ENCODE measurements at regions of chr16 and their contacts with region 1.

Region 1: DNA sequence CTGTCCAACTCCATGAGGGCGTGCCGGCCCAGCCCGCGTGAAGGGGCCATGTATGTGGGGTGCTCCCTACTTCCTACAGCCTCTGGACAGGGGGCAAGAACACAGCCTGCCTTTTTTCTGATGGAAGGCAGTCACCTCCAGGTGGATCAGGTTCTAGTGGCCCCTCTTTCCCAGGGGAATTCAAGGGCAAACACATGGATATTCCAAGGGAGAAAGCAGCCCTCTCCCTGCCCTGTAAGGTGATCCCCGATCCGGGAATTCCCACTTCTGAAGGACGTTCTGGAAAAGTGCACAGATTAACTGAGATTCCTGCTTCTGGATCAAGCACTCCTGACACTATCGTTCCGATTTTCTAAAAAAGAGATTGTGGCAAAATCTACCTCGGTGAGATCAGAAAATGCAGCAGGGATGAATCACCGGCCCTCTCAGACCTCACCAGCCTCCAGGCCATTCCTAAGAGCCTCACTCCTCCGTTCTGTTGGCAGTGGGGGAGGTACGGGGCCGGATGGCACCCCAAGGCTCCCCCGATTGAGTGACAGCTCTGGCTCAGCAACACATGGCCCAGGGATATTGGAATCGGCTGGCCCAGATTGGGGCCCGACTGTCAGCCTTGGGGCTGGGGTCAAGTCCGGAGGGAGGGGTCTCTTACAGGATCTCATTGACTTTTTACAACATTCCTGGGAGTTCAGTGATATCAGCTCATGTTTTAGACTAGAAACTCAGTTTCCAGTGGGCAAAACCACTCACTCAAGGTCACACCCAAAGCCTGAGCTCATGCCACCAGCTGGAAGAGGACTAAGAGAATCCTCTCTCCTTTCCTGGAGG is 12.3 kb downstream of the STX1B start:
- DNase-seq: peak; percentile 55
- H3K4me3 ChIP-seq: peak overlapping the region; percentile 49
- H3K27ac ChIP-seq: peak overlapping the region; percentile 99
- H3K27me3 ChIP-seq: no peaks in the 10 kb centered on the region
- CTCF ChIP-seq: no peak

Region 2: DNA sequence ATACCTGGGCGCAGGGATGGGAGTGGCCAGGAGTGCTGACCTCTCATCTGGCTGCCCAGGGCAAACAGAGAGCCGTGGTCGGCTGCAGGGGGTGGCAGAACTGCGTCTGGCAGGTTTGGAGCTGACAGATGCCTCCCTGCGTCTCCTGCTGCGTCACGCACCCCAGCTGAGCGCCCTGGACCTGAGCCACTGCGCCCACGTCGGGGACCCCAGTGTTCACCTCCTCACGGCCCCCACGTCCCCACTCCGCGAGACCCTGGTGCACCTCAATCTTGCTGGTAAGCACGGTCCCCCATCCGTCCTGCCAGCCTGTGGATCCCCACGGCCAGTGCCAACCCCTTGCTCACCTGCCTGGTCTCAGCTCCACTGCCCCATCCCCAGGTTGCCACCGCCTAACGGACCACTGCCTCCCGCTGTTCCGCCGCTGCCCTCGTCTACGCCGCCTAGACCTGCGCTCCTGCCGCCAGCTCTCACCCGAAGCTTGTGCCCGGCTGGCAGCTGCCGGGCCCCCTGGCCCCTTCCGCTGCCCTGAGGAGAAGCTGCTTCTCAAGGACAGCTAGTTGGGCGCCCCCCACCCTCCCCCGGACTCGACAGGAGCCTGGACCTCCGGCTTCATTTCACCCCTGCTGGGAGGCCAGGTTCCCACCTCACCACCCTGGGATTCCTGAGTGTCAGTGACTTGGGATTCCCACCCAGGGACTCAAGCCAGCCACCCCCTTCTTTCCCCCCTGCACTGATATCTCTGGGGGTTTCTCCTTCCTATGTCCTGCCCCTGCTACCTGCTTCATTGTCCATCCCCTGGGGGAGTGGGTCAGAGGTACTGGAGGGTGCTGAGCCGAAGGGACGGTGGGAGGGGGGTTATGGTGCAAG is 51.2 kb before region 1 on chr16:
- CTCF ChIA-PET with region 1: no interaction called
- POLR2A ChIA-PET with region 1: interaction called, 10 read pairs
- DNase-seq: no peak
- H3K4me3 ChIP-seq: no peak overlapping the region
- H3K27ac ChIP-seq: no peak overlapping the region
- H3K27me3 ChIP-seq: no peaks in the 10 kb centered on the region
- CTCF ChIP-seq: no peak

Region 3: DNA sequence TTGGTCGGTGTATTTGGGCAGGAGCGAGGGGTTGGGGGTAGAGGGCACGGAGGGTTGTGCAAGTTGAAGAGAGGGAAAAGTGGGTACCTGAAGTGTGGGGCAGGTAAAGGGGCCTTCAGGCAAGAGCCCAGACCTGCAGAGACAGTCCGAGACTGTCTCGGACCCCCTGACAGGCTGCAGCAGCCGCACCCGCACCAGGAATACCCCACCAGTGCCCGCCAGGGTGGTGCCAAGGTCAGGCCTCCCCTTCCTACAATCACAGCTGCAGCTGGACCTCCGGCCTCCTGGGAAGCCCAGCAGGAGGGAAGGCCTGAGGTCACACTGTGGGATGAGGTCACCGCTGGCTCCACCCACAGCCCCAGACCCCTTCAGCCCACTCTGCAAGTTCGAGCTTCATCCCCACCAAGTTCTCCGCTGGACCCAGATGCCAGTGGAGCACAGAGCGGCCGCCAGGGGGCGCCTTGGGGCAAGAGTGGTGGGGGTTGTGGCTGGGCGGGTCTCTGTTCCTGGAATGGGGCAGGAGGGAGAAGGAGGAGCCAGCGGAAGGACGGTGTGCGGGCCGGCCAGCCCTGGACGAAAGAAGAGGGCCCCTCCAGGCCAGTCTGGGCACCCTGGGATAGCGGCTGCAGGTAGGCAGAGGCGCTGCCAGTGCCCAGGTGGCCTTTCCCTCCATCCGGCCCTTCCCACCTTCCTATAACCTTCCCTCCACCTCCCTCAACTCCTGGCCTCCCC is 13.3 kb before region 1 on chr16 and contains the start of gene HSD3B7:
- CTCF ChIA-PET with region 1: interaction called, 12 read pairs
- POLR2A ChIA-PET with region 1: interaction called, 3 read pairs
- DNase-seq: peak; percentile 44
- H3K4me3 ChIP-seq: peak within 1 kb of the TSS; percentile 53
- H3K27ac ChIP-seq: peak within 1 kb of the TSS; percentile 11
- H3K27me3 ChIP-seq: no peaks in the 10 kb centered on the region
- CTCF ChIP-seq: peak; percentile 90
- polyA plus RNA-seq, gene HSD3B7: 6.1 and 9.5 TPM in 2 replicates